Sigmoid colon (tissue), 7 donors: ENCODE measurements at regions of chr11 and their contacts with region 1.

Region 1: DNA sequence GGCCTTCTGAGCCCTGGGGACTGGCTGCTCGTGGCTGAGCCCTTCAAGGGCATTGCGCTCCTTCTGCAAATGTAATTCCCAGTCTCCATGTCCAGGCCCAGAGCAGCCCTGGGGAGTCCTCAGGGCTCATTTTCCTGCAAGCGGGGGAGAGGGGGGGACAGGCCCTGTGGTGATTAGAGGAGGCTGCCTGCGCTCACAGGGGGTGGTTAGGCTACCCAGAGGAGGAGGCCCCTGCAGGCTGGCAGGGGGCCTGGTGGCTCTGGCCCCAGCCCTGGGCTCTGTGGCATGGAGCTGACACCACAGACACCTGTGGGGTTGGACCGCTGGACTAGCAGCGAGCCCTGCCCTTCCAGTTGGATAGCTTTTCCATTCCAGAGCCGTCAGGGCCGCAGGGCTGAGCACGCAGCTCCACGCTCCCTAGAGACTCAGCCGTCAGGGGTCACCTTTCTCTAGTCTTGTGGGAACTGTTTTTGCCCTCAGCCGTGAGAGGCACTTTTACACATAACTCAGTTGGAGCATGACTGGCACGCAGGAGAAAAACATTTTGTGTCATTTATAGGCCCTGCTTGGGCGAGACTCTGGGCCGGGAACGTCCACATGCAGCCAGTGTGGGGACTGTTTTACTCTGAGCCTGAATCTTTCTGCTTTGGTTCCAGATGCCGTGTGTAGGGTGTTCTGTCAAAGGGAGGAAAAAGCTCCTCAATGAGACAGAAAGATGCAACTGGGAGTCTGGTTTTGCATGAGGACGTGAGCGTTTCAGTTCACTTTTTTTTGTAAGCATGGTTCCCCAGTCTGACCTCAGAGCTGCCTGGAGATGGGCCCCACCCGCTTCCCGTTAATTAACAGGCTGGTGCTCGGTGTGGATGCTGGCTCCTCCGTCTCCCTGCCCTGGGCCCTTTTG is 58.1 kb downstream of the LRP5 start:
- DNase-seq: no peak
- H3K4me3 ChIP-seq: no peak overlapping the region
- H3K27ac ChIP-seq: peak overlapping the region; percentile 87 to 92 (median 90)
- H3K4me1 ChIP-seq: peaks cover 0 to 66% (median 65%) of the 10 kb centered on the region in 4 donors
- H3K27me3 ChIP-seq: no peaks in the 10 kb centered on the region
- CTCF ChIP-seq: no peak
- EP300 ChIP-seq: no peak
- POLR2A ChIP-seq: no peak

Region 2: DNA sequence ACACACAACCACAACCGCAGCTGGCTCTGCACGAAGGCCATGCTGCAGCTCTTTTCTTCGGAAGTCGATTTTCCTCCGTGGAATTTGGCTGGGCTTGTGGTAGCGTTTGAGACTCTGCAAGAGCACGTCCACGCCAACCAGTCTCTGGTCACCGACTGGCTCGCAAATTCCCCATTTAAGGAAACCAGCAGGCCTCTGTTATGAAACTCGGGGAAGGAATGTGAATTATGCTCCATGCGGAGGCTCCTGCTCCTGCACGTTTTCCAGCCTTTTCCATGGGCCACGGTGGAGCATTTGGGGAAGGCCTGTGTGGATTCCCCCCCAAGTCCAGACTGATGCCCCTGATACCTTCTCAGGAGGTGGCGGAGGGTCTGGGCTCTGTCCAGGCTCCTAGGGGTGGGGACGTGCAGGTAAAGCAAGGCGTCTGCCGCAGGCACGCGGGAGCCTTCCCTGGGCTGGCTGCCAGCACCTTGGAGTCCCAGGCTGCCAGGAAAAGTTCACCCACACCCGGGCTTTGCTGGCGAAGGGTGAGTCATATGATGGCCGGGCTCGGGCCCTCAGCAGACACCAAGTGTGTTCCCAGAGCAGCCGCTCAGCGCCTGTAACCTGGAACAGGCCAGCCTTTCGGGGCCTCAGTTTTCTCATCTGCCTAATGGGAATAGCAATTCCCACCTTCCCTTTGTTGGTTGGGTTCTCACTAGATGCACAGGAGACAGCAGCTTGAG is 16.2 kb before region 1 on chr11:
- intact Hi-C with region 1: loop called (anchors 2 kb)
- DNase-seq: peak; percentile 97
- H3K4me3 ChIP-seq: no peak overlapping the region
- H3K27ac ChIP-seq: peak overlapping the region; percentile 85 to 96 (median 93)
- H3K4me1 ChIP-seq: peaks cover 0 to 94% (median 91%) of the 10 kb centered on the region in 4 donors
- H3K27me3 ChIP-seq: no peaks in the 10 kb centered on the region
- CTCF ChIP-seq: no peak
- EP300 ChIP-seq: peak in 2 of 4 donors; percentile 51 to 59
- POLR2A ChIP-seq: peak in 1 of 2 donors; percentile 10

Region 3: DNA sequence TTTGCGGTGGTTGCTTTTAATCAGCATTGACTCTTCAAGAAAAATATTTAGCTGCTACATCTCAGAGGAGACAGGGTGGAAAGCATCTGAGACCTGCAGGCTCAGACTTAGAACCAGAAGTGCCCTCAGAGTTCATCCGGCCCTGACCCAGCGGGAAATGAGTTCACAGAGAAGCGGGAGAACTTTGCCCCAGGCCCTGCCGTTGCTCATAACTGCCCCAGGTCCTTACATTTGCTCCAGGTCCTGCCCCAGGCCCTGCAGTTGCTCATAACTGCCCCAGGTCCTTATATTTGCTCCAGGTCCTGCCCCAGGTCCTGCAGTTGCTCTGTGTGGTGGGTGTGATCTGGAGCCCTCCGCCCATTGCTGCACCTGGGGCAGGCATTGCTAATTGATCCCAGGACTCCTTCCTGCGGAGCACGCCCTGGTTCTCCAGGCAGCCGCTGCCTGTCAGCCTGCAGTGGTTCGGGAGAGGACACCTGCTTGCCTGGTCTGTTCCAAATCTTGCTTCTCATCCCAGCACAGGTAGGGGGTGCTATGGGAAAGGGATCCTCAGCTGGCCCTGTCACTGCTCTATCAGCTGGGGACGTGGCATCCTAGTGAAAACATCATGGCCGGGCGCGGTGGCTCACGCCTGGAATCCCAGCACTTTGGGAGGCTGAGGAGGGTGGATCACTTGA is 32.0 kb after region 1 on chr11:
- intact Hi-C with region 1: no loop called
- DNase-seq: no peak
- H3K4me3 ChIP-seq: no peak overlapping the region
- H3K27ac ChIP-seq: peak overlapping the region in 3 of 4 donors; percentile 84 to 93 (median 92)
- H3K4me1 ChIP-seq: peaks cover 0 to 55% (median 52%) of the 10 kb centered on the region in 4 donors
- H3K27me3 ChIP-seq: no peaks in the 10 kb centered on the region
- CTCF ChIP-seq: no peak
- EP300 ChIP-seq: no peak
- POLR2A ChIP-seq: no peak